ENCODE measurements at regions of chr5 and their contacts with region 1.

Region 1: GRCh38 chr5:115317320-115317719 is 20.9 kb upstream of the CCDC112 start:
- DNase-seq: no peak
- H3K4me3 ChIP-seq: no peak overlapping the region
- H3K27ac ChIP-seq: no peak overlapping the region
- H3K4me1 ChIP-seq: no peaks in the 10 kb centered on the region
- H3K27me3 ChIP-seq: peaks cover 10% of the 10 kb centered on the region
- CTCF ChIP-seq: no peak

Region 2: GRCh38 chr5:115377468-115378217 is 60.3 kb after region 1 on chr5:
- CTCF ChIA-PET with region 1: no interaction called
- POLR2A ChIA-PET with region 1: interaction called, 10 read pairs
- intact Hi-C with region 1: no loop called
- DNase-seq: peak; percentile 16
- H3K4me3 ChIP-seq: no peak overlapping the region
- H3K27ac ChIP-seq: no peak overlapping the region
- H3K4me1 ChIP-seq: no peaks in the 10 kb centered on the region
- H3K27me3 ChIP-seq: no peaks in the 10 kb centered on the region
- CTCF ChIP-seq: no peak

Measured in A673 (cell line).